MCF 10A (cell line): ENCODE measurements at regions of chr12 and their contacts with region 1.

Region 1: DNA sequence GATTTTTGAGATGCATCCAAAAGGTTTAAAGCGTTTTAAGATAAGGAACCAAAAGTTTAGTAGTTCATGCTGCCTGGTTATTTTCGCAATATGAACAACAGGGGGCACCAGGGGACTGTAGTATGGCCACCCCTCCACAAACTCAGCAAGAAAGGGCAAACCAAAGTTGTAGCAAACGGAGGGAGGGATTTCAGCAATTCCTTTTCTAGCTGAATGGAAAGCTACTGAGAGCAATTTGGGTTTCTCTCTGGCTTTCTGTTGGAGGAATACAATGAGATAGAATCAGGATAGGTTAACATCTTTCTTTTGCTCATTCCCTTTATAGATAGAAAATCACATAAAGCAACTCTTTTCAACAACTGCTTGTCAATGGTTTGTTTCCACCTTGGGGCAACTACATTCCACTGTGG is 62.5 kb downstream of the DRAM1 start:
- DNase-seq: peak; percentile 81
- H3K4me3 Mint-ChIP-seq: no peak overlapping the region
- H3K27ac Mint-ChIP-seq: no peak overlapping the region
- H3K4me1 Mint-ChIP-seq: peaks cover 23% of the 10 kb centered on the region
- H3K27me3 Mint-ChIP-seq: no peaks in the 10 kb centered on the region
- CTCF ChIP-seq: peak; percentile 77

Region 2: DNA sequence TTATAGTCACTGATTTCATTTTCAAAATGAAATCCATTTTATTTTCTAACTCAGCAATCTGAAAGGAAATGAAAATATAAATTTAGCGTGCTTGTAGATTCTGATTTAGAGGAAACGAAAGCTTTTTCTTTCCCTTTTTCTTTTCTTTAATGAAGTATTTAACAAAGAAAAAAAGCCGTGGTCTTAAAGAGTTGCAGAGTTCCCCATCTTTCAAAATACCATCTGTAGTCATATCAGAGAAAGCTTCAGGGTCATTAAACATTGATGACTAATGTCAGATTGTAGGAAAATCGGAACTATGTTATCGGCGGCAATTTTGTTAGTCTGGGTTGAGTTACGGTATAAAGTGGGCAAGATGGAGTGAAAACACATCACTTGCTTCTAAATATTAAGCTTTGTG is 30.2 kb before region 1 on chr12:
- CTCF ChIA-PET with region 1: interaction called, 11 read pairs
- POLR2A ChIA-PET with region 1: no interaction called
- intact Hi-C with region 1: no loop called
- DNase-seq: no peak
- H3K4me3 Mint-ChIP-seq: no peak overlapping the region
- H3K27ac Mint-ChIP-seq: no peak overlapping the region
- H3K4me1 Mint-ChIP-seq: no peaks in the 10 kb centered on the region
- H3K27me3 Mint-ChIP-seq: no peaks in the 10 kb centered on the region
- CTCF ChIP-seq: no peak

Region 3: DNA sequence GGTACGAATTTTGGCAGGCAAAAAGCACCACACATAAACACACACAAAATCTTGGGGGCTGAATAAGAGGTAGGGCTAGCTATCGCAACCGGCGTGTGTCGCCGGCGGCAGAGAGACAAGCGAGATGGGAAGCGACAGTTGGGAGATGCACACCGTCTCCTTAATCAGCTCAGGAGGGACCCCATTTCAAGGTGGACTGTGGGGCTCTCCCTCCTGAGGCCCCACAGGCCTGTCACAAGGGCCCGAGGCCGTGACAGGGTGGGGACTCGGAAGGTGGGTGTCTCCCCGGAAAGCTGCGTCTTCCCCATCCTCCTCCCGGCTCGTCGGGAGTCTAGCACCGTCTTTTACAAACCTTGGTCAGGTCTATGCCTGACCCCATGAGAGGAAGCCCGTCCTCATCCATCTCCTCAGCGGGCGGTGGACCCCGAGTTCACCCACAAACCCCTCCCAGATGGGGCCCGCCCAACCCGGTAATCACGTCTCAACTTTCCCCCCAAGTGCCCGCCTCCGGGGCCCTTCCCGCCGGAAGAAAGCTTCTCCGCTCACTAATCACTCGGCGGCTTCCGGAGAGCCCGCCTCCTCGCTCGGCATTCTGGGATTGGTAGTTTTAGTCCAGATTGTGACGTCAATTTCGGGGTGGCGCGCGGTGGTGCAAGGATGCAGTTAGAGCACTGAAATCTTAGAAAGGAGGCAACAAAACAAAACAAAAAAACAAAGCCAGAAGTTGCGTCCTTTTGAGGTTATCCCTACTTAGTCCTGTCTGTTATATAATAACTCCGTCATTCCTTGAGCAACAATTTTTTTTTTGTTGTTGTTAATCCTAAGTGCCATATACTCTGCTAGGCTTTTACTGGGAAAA is 121.9 kb after region 1 on chr12 and contains the start of gene WASHC3:
- CTCF ChIA-PET with region 1: interaction called, 6 read pairs
- POLR2A ChIA-PET with region 1: interaction called, 16 read pairs
- intact Hi-C with region 1: loop called (anchors 10 kb)
- DNase-seq: peak; percentile 95
- H3K4me3 Mint-ChIP-seq: peak within 1 kb of the TSS; percentile 100
- H3K27ac Mint-ChIP-seq: peak within 1 kb of the TSS; percentile 98
- H3K4me1 Mint-ChIP-seq: no peaks in the 10 kb centered on the region
- H3K27me3 Mint-ChIP-seq: no peaks in the 10 kb centered on the region
- CTCF ChIP-seq: no peak
- total RNA-seq, gene WASHC3: 29.4 and 38.0 TPM in 2 replicates

Region 4: DNA sequence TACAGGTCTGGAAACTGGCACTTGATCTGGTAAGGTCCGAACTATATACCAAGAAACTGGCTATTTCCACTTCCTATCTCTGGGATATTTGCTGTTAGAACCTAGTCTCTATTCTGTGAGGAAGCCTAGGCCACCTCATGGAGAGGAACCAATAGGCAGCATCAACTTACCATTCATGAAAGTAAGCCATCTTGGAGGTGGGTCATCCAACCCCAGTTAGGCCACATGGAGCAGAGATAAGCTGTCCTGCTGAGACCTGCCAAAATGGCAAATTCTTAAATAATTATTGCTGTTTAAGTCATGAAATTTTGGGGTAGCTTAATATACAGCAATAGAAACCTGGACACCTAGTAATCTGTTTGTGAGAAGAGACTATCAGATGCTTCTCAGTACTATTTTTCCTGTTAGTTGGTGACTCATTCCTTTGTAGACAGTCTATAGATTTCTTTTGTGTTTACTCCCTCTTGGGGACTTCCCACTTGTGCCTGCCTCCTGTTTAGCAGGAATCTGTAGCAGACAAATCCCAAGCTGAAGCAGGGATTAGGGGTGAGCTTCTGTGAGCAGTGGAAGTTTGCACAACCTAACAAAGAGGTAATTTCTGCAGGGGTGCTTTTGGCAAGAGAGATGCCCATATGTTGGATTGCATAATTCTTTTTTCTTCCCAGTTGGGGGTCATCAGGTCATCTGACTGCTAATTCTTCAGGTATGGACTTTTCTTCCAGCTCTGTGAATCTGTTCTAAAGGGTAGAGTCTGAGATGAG is 403.7 kb after region 1 on chr12:
- CTCF ChIA-PET with region 1: no interaction called
- POLR2A ChIA-PET with region 1: no interaction called
- intact Hi-C with region 1: no loop called
- DNase-seq: peak; percentile 43
- H3K4me3 Mint-ChIP-seq: no peak overlapping the region
- H3K27ac Mint-ChIP-seq: no peak overlapping the region
- H3K4me1 Mint-ChIP-seq: no peaks in the 10 kb centered on the region
- H3K27me3 Mint-ChIP-seq: no peaks in the 10 kb centered on the region
- CTCF ChIP-seq: no peak

Region 5: GRCh38 chr12:102702447-102703114 is 762.7 kb after region 1 on chr12:
- CTCF ChIA-PET with region 1: interaction called, 3 read pairs
- POLR2A ChIA-PET with region 1: no interaction called
- intact Hi-C with region 1: loop called (anchors 1 kb)
- DNase-seq: peak; percentile 51
- H3K4me3 Mint-ChIP-seq: no peak overlapping the region
- H3K27ac Mint-ChIP-seq: no peak overlapping the region
- H3K4me1 Mint-ChIP-seq: no peaks in the 10 kb centered on the region
- H3K27me3 Mint-ChIP-seq: peaks cover 54% of the 10 kb centered on the region
- CTCF ChIP-seq: peak; percentile 17

Region 6: DNA sequence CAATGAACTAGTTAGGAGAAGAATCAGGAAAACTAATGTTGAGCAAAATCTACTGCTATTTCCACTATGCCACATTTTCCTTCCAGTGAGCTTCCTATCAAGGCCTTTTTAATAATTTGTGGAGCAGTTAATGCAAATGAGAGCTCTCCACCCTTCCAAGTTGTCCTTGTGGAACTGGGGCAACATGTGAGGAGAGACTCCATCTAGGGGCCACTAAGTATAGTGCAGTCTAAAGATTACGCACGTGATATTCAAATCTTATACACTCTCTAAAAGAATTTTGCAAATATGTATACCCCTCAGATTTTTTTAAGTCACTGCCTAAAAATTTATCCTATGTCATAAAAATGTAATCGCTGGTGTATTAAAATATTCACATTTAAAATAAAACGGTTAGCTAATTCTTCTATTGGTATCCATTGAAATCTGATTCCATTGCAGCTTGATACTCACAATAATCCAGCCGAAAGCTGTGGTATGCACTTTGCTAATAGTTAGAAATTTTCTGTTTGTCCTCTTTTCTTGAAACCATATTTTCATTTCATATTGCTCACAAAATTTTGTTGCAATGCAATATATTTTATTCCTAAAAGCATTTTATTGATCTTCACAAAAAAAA is 877.1 kb after region 1 on chr12:
- CTCF ChIA-PET with region 1: interaction called, 7 read pairs
- POLR2A ChIA-PET with region 1: no interaction called
- intact Hi-C with region 1: loop called (anchors 5 kb)
- DNase-seq: peak; percentile 48
- H3K4me3 Mint-ChIP-seq: no peak overlapping the region
- H3K27ac Mint-ChIP-seq: no peak overlapping the region
- H3K4me1 Mint-ChIP-seq: peaks cover 9% of the 10 kb centered on the region
- H3K27me3 Mint-ChIP-seq: peaks cover 26% of the 10 kb centered on the region
- CTCF ChIP-seq: peak; percentile 58